SK-N-SH (cell line): ENCODE measurements at regions of chr6 and their contacts with region 1.

Region 1: GRCh38 chr6:36765594-36766398 is 68.2 kb downstream of the RAB44 start:
- DNase-seq: peak; percentile 90
- H3K4me3 ChIP-seq: peak overlapping the region in 1 of 2 experiments; percentile 46; a peak in 1 of 4 replicates
- H3K27ac ChIP-seq: no peak overlapping the region
- H3K4me1 ChIP-seq: peaks cover 13 to 14% of the 10 kb centered on the region in 2 experiments; a peak in 3 of 4 replicates
- H3K27me3 ChIP-seq: no peaks in the 10 kb centered on the region
- CTCF ChIP-seq: peak; percentile 87
- EP300 ChIP-seq: no peak
- RAD21 ChIP-seq: peak; percentile 98

Region 2: DNA sequence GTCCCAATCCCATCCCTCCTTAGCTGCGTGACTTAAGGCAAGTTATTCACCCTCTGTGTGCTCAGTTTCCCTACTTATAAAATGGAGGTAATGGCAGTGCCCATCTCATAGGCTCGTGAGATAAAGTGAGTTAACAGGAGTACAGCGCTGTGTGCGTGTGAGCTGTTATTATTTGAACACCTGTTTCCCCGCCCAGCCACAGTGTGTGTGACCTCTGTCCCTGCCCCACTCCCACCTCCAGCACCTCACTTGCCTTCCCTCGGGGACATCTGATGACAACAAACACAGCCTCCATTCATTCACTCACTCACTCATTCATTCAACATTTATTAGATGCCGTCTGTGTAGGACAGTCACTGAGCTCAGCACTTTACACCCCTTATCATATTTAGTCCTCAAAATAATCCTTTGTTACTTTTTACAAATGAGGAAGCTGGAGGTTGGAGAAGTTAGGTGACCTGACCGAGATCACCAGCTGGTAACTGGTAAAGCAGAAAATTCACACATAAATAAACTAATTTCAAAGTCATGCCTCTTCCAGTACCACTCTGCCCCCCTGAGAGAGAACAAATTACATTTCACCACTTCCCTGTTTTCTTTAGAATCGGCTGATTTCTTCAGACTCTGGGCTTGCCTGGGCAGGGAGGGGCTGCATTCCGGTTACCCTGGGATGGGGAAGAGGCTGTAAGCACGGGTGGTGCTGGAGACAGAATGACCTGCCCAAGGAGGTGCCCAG is 14.8 kb after region 1 on chr6:
- CTCF ChIA-PET with region 1: interaction called, 71 read pairs
- POLR2A ChIA-PET with region 1: no interaction called
- DNase-seq: no peak
- H3K4me3 ChIP-seq: no peak overlapping the region
- H3K27ac ChIP-seq: no peak overlapping the region
- H3K4me1 ChIP-seq: peaks cover 0 to 7% of the 10 kb centered on the region in 2 experiments; a peak in 1 of 4 replicates
- H3K27me3 ChIP-seq: 0 out of 2 replicates have a peak, but pooled peaks cover 7% of the 10 kb centered on the region
- CTCF ChIP-seq: no peak
- EP300 ChIP-seq: no peak
- RAD21 ChIP-seq: no peak

Region 3: GRCh38 chr6:36839749-36840431 is 74.1 kb after region 1 on chr6:
- CTCF ChIA-PET with region 1: interaction called, 12 read pairs
- POLR2A ChIA-PET with region 1: no interaction called
- DNase-seq: peak; percentile 87
- H3K4me3 ChIP-seq: peak overlapping the region; percentile 55 to 62
- H3K27ac ChIP-seq: no peak overlapping the region
- H3K4me1 ChIP-seq: peaks cover 0 to 18% of the 10 kb centered on the region in 2 experiments; a peak in 1 of 4 replicates
- H3K27me3 ChIP-seq: peaks cover 12% of the 10 kb centered on the region
- CTCF ChIP-seq: peak; percentile 43
- EP300 ChIP-seq: no peak
- RAD21 ChIP-seq: no peak

Region 4: DNA sequence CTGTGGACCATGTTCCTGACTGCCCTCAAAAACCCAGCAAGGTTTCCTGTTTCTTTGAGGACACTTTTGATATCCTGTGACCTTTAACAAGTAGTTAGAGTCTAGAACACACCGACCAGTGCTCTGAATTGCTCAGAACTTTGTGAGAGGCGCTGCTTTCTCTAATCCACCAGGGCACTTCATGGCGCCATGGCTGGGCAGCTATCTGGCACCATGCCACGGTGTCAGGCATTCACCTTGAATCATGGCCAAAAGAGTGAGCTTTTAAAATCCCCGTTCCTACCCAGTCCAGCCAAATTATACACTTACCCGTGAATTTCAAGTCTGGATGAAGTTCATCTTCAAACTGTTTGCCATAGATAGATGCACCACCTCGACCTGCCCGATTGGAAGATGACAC is 90.5 kb after region 1 on chr6:
- CTCF ChIA-PET with region 1: interaction called, 200 read pairs
- POLR2A ChIA-PET with region 1: no interaction called
- DNase-seq: no peak
- H3K4me3 ChIP-seq: no peak overlapping the region
- H3K27ac ChIP-seq: no peak overlapping the region
- H3K4me1 ChIP-seq: peaks cover 9 to 10% of the 10 kb centered on the region in 2 experiments; a peak in 2 of 4 replicates
- H3K27me3 ChIP-seq: no peaks in the 10 kb centered on the region
- CTCF ChIP-seq: no peak
- EP300 ChIP-seq: no peak
- RAD21 ChIP-seq: no peak

Region 5: DNA sequence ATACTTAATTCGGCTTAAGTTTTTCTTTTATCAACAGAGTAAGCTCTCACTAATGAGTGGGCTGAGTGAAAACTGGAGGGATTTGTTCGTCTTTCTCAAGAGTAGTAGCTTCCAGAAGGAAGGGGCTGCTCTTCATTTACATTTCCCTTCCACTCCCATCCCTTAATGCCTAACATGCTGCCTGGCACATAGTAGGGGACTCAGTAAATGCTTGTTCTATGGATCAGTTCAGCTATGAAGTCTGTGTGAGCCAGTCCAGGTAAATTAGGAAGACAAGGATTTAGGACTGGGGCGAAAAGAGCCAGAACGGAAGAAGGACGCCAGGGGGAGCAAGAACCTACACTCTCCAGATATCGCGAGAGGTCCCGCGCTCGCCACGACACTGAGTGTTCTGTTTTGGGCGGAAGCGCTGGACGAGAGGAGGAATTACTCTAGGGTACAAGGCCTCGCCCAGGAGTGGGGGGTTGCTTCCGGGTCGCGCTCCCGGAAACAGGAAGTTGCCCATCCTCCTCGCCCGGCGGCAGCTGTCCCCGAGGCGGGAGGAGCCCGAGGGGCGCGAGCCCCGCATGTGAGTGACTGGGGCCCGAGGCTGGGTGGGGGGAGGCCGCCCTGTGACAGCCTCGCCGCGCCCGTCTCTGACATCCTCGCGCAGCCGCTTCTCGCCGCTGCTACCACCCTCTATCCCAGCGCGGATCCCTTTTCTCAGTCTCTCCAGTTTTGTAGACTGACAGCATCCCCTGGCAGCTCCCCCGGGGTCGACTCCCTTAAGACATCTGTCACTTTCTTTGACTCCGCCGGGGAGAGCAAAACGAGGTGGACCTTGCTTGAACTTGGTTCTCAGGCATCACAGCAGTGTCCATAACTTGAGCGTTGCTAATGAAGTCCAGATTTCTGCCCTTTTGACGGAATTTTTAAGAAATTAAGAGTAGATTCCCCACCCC is 119.9 kb after region 1 on chr6 and contains the start of gene C6orf89:
- CTCF ChIA-PET with region 1: interaction called, 16 read pairs
- POLR2A ChIA-PET with region 1: no interaction called
- DNase-seq: peak; percentile 94
- H3K4me3 ChIP-seq: peak within 1 kb of the TSS; percentile 90 to 96
- H3K27ac ChIP-seq: peak within 1 kb of the TSS; percentile 73 to 84
- H3K4me1 ChIP-seq: peaks cover 0 to 5% of the 10 kb centered on the region in 2 experiments; a peak in 1 of 4 replicates
- H3K27me3 ChIP-seq: no peaks in the 10 kb centered on the region
- CTCF ChIP-seq: peak; percentile 79
- EP300 ChIP-seq: peak in 1 of 2 experiments; percentile 36; a peak in 1 of 4 replicates
- RAD21 ChIP-seq: peak; percentile 58
- polyA plus RNA-seq, gene C6orf89: 20.4 and 29.8 TPM in 2 replicates

Region 6: DNA sequence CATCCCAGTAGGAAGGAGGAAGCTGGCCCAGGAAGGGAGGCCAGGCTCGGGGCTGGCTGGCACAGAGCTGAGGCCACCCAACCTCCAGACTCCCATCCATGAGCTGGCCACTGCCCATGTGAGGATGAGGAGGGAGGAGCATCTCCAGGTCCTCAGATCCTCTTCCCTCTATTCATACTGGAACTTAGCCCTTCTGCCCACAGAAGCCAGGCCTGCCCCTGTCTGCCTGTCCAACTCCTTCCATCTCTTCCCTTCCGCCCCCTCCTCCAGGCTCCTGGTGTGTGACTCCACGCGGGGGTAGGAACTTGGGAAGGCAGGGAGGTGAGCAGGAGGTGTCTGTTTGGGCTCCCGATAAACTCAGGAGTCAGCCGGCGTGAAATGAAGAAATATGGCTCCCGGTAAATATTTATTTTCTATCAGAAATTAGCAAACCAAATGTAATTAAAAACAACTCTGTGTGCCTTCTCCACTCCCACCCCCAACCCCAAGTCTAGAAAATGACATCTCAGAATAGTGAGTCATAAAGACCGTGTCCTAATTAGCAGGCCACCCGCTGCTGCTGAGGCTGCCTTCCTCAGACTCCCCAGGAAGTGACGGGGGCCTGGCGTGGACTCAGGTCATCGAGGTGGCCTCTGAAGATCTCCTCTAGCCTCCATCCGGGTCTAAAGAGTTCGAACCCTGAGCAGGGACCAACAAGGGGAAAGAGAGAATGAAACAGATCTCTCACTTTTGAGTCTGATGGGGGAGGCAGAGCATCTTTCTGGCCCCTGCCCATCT is 850.0 kb after region 1 on chr6:
- CTCF ChIA-PET with region 1: no interaction called
- POLR2A ChIA-PET with region 1: no interaction called
- DNase-seq: no peak
- H3K4me3 ChIP-seq: no peak overlapping the region
- H3K27ac ChIP-seq: no peak overlapping the region
- H3K4me1 ChIP-seq: peaks cover 7 to 20% of the 10 kb centered on the region in 2 experiments; a peak in 3 of 4 replicates
- H3K27me3 ChIP-seq: no peaks in the 10 kb centered on the region
- CTCF ChIP-seq: no peak
- EP300 ChIP-seq: no peak
- RAD21 ChIP-seq: no peak